Heart left ventricle (tissue), 16 donors: ENCODE measurements at regions of chr1 and their contacts with region 1.

Region 1: GRCh38 chr1:205907794-205908193 is 35.5 kb downstream of the SLC26A9 start:
- DNase-seq: no peak
- ATAC-seq: peak in 2 of 4 donors; percentile 60 to 68
- H3K4me3 ChIP-seq: no peak overlapping the region
- H3K27ac ChIP-seq: no peak overlapping the region
- H3K4me1 ChIP-seq: peaks cover 0 to 4% (median 0%) of the 10 kb centered on the region in 12 donors
- H3K27me3 ChIP-seq: no peaks in the 10 kb centered on the region
- CTCF ChIP-seq: peak in 11 of 12 donors; percentile 31 to 67 (median 51)
- POLR2A ChIP-seq: no peak

Region 2: GRCh38 chr1:205791568-205792180 is 116.1 kb before region 1 on chr1:
- intact Hi-C with region 1: loop called in 6 of 10 experiments (anchors 5 kb)
- DNase-seq: peak in 3 of 5 donors; percentile 60 to 69 (median 61)
- ATAC-seq: peak; percentile 55 to 71 (median 62)
- H3K4me3 ChIP-seq: no peak overlapping the region
- H3K27ac ChIP-seq: peak overlapping the region in 4 of 12 donors; percentile 1 to 25 (median 10)
- H3K4me1 ChIP-seq: peaks cover 0 to 23% (median 1%) of the 10 kb centered on the region in 12 donors
- H3K27me3 ChIP-seq: no peaks in the 10 kb centered on the region
- CTCF ChIP-seq: peak; percentile 49 to 82 (median 74)
- POLR2A ChIP-seq: no peak

Region 3: DNA sequence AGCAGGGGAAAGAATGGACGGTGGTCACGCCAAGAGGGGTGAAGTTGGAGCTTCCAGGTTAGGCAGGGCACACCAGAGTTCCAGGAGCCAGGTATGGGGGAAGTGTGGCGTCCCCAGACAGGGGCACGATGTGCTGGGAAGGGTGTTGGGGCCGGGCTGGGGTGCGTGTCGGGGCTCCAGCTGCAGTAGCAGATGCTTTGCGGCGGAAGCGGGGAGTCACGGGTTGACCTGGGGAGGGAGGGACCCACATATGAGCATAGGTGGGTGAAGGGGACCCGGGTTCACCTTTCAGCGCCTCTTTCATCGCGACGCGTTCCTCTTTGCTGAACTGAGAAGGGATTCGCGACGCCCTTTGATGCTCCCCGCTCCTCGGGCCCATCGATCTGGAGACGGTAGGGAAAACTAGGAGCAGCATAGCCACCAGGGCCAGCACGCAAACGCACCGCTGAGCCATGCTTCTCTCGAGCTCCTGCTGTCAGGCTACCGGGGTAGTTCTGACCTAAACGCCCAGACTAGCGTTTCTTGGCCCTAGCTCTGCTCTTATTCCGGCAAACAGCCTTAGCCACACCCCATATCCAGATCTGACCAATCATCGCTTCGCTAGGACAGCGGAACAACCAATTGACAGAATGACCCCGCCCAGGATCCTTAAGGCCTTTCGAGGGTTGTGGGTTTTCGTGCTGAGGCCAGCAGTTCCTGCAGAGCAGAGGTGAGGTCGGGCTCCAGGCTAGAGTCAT is 58.0 kb before region 1 on chr1 and contains the start of gene PM20D1:
- intact Hi-C with region 1: loop called in 1 of 10 experiments (anchors 5 kb)
- DNase-seq: peak; percentile 76 to 92 (median 86)
- ATAC-seq: peak; percentile 97 to 100 (median 99)
- H3K4me3 ChIP-seq: peak within 1 kb of the TSS; percentile 21 to 77 (median 54)
- H3K27ac ChIP-seq: peak within 1 kb of the TSS in 3 of 12 donors; percentile 17 to 29 (median 18)
- H3K4me1 ChIP-seq: peaks cover 0 to 11% (median 1%) of the 10 kb centered on the region in 12 donors
- H3K27me3 ChIP-seq: no peaks in the 10 kb centered on the region
- CTCF ChIP-seq: no peak
- POLR2A ChIP-seq: peak in 1 of 2 donors; percentile 64
- total RNA-seq, gene PM20D1: 0.45 to 1.4 (median 0.78) TPM in 8 of 9 donors, not detected in the other